ENCODE measurements at regions of chr1 and their contacts with region 1.

Region 1: DNA sequence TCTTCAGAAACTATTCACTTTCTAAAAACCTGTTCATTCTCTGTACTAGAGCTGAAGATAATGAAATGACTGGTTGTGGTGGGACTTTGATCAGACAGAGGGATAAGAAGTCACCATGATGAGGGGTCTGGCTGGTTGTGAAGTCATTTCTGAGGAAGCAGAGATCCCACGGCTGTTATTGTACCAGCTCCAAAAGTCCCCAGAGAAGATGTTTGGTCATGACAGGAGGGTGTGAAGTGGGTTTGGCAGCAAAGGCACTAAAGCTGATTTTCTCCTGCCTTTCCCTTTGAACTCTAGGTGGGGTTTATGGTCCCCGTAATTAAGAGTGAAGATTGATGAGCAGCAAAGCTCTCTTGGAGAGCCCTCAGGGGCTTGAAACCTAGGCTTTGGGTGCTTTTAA is 103.1 kb upstream of the CACHD1 start:
- DNase-seq: no peak
- ATAC-seq: no peak
- H3K4me3 ChIP-seq: no peak overlapping the region
- H3K27ac ChIP-seq: no peak overlapping the region
- H3K4me1 ChIP-seq: no peaks in the 10 kb centered on the region
- H3K27me3 ChIP-seq: no peaks in the 10 kb centered on the region
- CTCF ChIP-seq: no peak
- POLR2A ChIP-seq: no peak

Region 2: DNA sequence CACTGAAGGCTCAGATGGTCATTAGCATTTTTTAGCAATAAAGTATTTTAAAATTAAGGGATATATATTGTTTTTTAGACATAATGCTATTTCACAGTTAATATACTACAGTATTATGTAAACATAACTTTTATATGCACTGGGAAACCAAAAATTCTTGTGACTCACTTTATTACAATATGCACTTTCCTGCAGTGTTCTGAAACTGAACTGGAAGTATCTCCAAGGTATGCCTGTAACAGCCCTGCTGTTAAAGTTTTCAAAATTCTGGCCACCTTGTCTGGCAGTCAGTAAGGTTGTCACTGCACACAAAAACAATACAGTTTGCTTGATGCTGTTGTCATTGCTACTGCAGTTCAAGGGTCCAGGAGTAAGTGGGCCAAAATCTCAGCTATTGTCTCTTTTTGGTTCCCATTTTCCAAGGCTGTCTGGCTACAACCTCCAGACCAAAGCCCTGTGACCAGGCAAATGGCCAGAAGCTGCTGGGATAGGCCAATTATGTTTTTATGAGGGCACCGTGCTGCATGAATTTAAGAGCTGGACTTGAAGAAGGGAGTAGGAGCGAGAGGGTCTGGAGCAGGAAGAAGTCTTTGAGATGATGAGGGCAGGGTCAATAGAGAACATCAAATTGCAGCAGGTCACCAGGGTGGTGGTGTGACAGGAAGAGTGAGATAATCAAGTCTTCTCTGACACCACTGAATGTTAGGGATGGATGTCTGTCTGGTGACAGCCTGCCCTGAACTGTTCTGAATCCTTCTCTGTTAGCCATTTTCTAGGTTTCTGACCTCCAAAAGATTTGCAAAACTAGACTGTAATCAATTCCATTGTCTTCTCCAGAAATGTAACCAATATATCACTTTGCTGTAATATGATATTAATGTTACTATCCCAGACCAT is 20.8 kb after region 1 on chr1:
- in situ Hi-C with region 1: no loop called
- intact Hi-C with region 1: loop called (anchors 2 kb)
- DNase-seq: no peak
- ATAC-seq: no peak
- H3K4me3 ChIP-seq: no peak overlapping the region
- H3K27ac ChIP-seq: no peak overlapping the region
- H3K4me1 ChIP-seq: no peaks in the 10 kb centered on the region
- H3K27me3 ChIP-seq: no peaks in the 10 kb centered on the region
- CTCF ChIP-seq: no peak
- POLR2A ChIP-seq: no peak

Measured in gastrocnemius medialis (tissue), 4 donors.